WTC11 (cell line): ENCODE measurements at regions of chr6 and their contacts with region 1.

Region 1: DNA sequence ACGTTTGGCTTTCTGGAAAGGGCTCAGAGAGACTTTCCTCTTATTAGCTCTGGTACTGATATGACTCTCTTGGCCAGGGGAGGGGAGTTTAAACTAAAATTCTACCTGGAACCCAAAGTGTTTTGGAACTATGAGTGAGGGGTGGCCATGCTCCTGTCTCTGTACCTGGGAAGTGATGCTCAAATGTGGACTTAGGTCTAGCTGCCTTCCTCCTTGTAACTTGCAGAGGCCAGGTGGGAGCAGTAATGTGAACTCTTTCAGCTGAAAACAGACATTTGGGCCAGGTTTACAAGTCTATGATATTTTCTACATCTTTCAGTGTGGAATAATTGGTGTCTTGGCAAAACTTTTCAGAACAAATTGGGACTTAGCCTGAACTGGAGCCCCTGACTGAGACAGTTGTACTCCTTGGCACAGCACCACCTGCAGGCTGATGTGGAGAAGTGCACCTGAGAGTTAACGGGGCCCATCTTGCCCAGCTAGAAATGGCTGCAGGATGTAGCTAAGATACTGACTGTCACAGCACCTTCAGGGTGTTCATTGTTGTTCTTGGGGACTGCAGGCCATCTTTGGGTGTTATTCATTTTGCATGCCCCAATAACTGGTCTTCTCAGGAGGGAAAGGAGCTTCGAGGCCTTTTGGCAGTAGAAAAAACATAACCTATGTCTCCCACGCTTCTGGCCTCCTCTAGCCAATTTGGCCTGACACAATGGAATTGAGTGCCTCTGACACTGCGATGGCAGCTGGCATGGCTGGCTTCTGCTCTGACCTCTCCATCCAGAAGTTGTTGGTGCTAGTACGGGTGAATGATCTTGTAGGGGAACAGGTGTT is 37.1 kb downstream of the CD109 start:
- DNase-seq: peak; percentile 74
- ATAC-seq: peak; percentile 96
- H3K4me3 Mint-ChIP-seq: no peak overlapping the region
- H3K27ac Mint-ChIP-seq: no peak overlapping the region
- H3K4me1 Mint-ChIP-seq: peaks cover 8% of the 10 kb centered on the region
- H3K27me3 Mint-ChIP-seq: no peaks in the 10 kb centered on the region
- CTCF ChIP-seq: peak; percentile 92

Region 2: GRCh38 chr6:73675466-73676098 is 57.5 kb before region 1 on chr6:
- CTCF ChIA-PET with region 1: interaction called, 40 read pairs
- POLR2A ChIA-PET with region 1: no interaction called
- DNase-seq: peak; percentile 78
- ATAC-seq: peak; percentile 95
- H3K4me3 Mint-ChIP-seq: no peak overlapping the region
- H3K27ac Mint-ChIP-seq: no peak overlapping the region
- H3K4me1 Mint-ChIP-seq: no peaks in the 10 kb centered on the region
- H3K27me3 Mint-ChIP-seq: no peaks in the 10 kb centered on the region
- CTCF ChIP-seq: peak; percentile 85

Region 3: GRCh38 chr6:73713410-73714147 is 19.5 kb before region 1 on chr6:
- CTCF ChIA-PET with region 1: interaction called, 15 read pairs
- POLR2A ChIA-PET with region 1: no interaction called
- DNase-seq: no peak
- ATAC-seq: no peak
- H3K4me3 Mint-ChIP-seq: no peak overlapping the region
- H3K27ac Mint-ChIP-seq: no peak overlapping the region
- H3K4me1 Mint-ChIP-seq: peaks cover 23% of the 10 kb centered on the region
- H3K27me3 Mint-ChIP-seq: no peaks in the 10 kb centered on the region
- CTCF ChIP-seq: no peak